Naive thymus-derived CD4-positive, alpha-beta T cell (primary cell): ENCODE measurements at regions of chr17 and their contacts with region 1.

Region 1: GRCh38 chr17:17812211-17813057 is 24.4 kb downstream of the SREBF1 start:
- DNase-seq: peak; percentile 33 to 79 (median 61)
- ATAC-seq: peak; percentile 73
- H3K4me3 ChIP-seq: no peak overlapping the region
- H3K4me3 Mint-ChIP-seq: no peak overlapping the region
- H3K27ac ChIP-seq: peak overlapping the region; percentile 39
- H3K27ac Mint-ChIP-seq: peak overlapping the region in 8 of 9 donors; percentile 23 to 66 (median 58)
- H3K4me1 ChIP-seq: peaks cover 6 to 9% of the 10 kb centered on the region in 2 donors
- H3K4me1 Mint-ChIP-seq: peaks cover 5 to 18% (median 9%) of the 10 kb centered on the region in 7 donors
- H3K27me3 ChIP-seq: no peaks in the 10 kb centered on the region
- H3K27me3 Mint-ChIP-seq: no peaks in the 10 kb centered on the region

Region 2: GRCh38 chr17:17774009-17774881 is 38.2 kb before region 1 on chr17:
- CTCF ChIA-PET with region 1: no interaction called
- POLR2A ChIA-PET with region 1: no interaction called
- intact Hi-C with region 1: no loop called
- DNase-seq: no peak
- ATAC-seq: no peak
- H3K4me3 ChIP-seq: no peak overlapping the region
- H3K4me3 Mint-ChIP-seq: no peak overlapping the region
- H3K27ac ChIP-seq: no peak overlapping the region
- H3K27ac Mint-ChIP-seq: peak overlapping the region in 4 of 9 donors; percentile 43 to 68 (median 61)
- H3K4me1 ChIP-seq: no peaks in the 10 kb centered on the region
- H3K4me1 Mint-ChIP-seq: peaks cover 0 to 12% (median 10%) of the 10 kb centered on the region in 7 donors
- H3K27me3 ChIP-seq: no peaks in the 10 kb centered on the region
- H3K27me3 Mint-ChIP-seq: no peaks in the 10 kb centered on the region

Region 3: DNA sequence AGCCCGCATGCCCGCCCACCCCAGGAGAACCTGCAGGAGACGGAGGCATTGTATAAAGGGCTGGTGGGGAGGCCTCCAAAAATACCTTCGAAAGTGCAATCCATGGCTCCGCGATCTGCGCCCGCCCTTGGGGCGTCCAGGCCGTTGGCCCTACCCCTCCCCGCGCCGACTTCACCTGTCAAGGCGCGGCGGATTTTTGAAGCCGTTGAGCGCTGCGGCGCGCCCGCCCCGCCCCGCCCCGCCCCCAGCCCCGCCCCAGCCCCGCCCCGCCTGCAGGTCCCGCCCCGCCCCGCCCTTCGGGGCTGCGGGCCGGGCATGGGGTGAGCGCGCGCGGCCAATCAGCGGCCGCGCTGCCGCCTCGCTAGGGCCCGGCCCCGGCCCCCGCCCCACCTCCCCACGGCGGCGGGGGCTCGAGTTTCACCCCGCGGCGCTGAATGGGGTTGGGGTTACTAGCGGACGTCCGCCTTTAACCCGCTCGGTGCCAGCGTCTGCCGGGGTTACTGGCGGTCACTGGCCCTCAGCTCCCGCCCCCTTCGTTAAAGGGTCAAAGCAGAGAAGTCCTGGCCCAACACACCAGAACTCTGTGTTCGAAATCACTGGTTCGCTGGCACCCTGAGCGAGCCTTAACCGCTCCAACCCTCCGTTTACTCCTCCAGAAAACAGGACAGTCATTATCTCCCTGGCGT is 11.1 kb after region 1 on chr17:
- CTCF ChIA-PET with region 1: interaction called, 11 read pairs
- POLR2A ChIA-PET with region 1: interaction called, 3 read pairs
- intact Hi-C with region 1: loop called in 1 of 2 experiments (anchors 1 kb)
- DNase-seq: peak; percentile 71 to 84 (median 81)
- ATAC-seq: peak; percentile 93
- H3K4me3 ChIP-seq: peak overlapping the region; percentile 68
- H3K4me3 Mint-ChIP-seq: peak overlapping the region; percentile 78 to 86 (median 84)
- H3K27ac ChIP-seq: peak overlapping the region; percentile 74
- H3K27ac Mint-ChIP-seq: peak overlapping the region; percentile 78 to 96 (median 93)
- H3K4me1 ChIP-seq: peaks cover 41 to 81% of the 10 kb centered on the region in 2 donors
- H3K4me1 Mint-ChIP-seq: peaks cover 72 to 95% (median 87%) of the 10 kb centered on the region in 7 donors
- H3K27me3 ChIP-seq: no peaks in the 10 kb centered on the region
- H3K27me3 Mint-ChIP-seq: no peaks in the 10 kb centered on the region

Region 4: GRCh38 chr17:17849845-17850373 is 37.5 kb after region 1 on chr17:
- CTCF ChIA-PET with region 1: interaction called, 16 read pairs
- POLR2A ChIA-PET with region 1: no interaction called
- intact Hi-C with region 1: loop called in 1 of 2 experiments (anchors 1 kb)
- DNase-seq: peak; percentile 33 to 74 (median 69)
- ATAC-seq: peak; percentile 78
- H3K4me3 ChIP-seq: peak overlapping the region; percentile 17
- H3K4me3 Mint-ChIP-seq: peak overlapping the region; percentile 70 to 81 (median 76)
- H3K27ac ChIP-seq: peak overlapping the region; percentile 70
- H3K27ac Mint-ChIP-seq: peak overlapping the region; percentile 95 to 98 (median 96)
- H3K4me1 ChIP-seq: peaks cover 35 to 61% of the 10 kb centered on the region in 2 donors
- H3K4me1 Mint-ChIP-seq: peaks cover 45 to 82% (median 73%) of the 10 kb centered on the region in 7 donors
- H3K27me3 ChIP-seq: no peaks in the 10 kb centered on the region
- H3K27me3 Mint-ChIP-seq: no peaks in the 10 kb centered on the region

Region 5: GRCh38 chr17:17919169-17920107 is 107.0 kb after region 1 on chr17:
- CTCF ChIA-PET with region 1: interaction called, 3 read pairs
- POLR2A ChIA-PET with region 1: no interaction called
- intact Hi-C with region 1: loop called in 1 of 2 experiments (anchors 1 kb)
- DNase-seq: peak; percentile 18 to 77 (median 67)
- ATAC-seq: peak; percentile 90
- H3K4me3 ChIP-seq: no peak overlapping the region
- H3K4me3 Mint-ChIP-seq: no peak overlapping the region
- H3K27ac ChIP-seq: no peak overlapping the region
- H3K27ac Mint-ChIP-seq: peak overlapping the region in 5 of 9 donors; percentile 17 to 49 (median 34)
- H3K4me1 ChIP-seq: peaks cover 0 to 6% of the 10 kb centered on the region in 2 donors
- H3K4me1 Mint-ChIP-seq: peaks cover 21 to 34% (median 26%) of the 10 kb centered on the region in 7 donors
- H3K27me3 ChIP-seq: no peaks in the 10 kb centered on the region
- H3K27me3 Mint-ChIP-seq: no peaks in the 10 kb centered on the region